Colonic mucosa (tissue), 4 donors: ENCODE measurements at regions of chr17 and their contacts with region 1.

Region 1: GRCh38 chr17:57130761-57131461 is 45.9 kb downstream of the AKAP1 start:
- DNase-seq: peak; percentile 90
- H3K4me3 ChIP-seq: no peak overlapping the region
- H3K27ac ChIP-seq: no peak overlapping the region
- H3K4me1 ChIP-seq: no peaks in the 10 kb centered on the region
- H3K27me3 ChIP-seq: no peaks in the 10 kb centered on the region
- CTCF ChIP-seq: peak; percentile 89

Region 2: DNA sequence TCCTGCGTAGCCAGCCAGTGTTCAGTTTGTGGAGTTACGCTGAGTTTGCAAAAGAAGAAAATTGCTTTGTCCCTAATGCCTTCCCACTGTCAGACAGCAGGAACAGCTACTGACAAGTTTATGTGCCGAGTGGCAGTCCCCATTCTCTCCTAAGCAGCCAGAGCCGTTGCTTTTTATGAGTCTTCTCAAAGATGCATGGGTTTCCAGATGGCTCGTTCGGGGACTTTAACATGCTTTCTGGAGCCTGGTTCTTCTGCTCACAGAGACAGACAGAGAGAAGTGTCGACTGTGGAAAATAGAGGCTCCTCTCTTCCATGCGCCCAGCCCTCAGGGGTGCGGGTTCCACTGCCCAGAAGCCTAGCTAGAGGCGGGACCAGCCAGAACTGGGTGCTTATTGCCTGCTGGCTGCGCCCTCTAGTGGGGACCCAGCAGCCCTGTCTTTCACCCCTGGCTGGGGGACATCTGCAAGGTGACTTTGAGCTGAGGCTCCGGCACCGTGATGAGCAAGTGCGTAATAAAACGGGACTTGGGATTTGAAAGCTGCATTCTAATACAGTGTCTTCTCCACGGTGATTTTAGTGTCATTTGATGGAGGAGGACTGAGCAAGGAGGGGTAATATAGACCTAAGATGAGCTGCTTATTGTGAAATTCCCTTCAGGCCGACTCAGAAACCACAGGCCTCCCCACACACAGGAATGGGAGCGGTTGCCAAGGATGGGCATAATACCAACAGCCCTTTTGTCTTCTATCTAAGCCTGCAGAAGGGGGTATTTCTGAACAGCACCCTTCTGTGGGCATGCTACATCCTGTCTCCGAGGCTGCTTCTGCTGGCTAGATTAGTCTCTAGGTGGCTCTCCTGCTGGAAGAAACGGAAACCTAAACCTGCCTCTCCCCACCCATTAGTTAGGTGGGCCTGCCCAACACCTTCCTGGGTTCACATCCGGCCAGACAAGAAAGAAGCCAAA is 541.0 kb after region 1 on chr17:
- intact Hi-C with region 1: loop called (anchors 10 kb)
- DNase-seq: peak; percentile 55
- H3K4me3 ChIP-seq: no peak overlapping the region
- H3K27ac ChIP-seq: no peak overlapping the region
- H3K4me1 ChIP-seq: no peaks in the 10 kb centered on the region
- H3K27me3 ChIP-seq: no peaks in the 10 kb centered on the region
- CTCF ChIP-seq: peak; percentile 89

Region 3: DNA sequence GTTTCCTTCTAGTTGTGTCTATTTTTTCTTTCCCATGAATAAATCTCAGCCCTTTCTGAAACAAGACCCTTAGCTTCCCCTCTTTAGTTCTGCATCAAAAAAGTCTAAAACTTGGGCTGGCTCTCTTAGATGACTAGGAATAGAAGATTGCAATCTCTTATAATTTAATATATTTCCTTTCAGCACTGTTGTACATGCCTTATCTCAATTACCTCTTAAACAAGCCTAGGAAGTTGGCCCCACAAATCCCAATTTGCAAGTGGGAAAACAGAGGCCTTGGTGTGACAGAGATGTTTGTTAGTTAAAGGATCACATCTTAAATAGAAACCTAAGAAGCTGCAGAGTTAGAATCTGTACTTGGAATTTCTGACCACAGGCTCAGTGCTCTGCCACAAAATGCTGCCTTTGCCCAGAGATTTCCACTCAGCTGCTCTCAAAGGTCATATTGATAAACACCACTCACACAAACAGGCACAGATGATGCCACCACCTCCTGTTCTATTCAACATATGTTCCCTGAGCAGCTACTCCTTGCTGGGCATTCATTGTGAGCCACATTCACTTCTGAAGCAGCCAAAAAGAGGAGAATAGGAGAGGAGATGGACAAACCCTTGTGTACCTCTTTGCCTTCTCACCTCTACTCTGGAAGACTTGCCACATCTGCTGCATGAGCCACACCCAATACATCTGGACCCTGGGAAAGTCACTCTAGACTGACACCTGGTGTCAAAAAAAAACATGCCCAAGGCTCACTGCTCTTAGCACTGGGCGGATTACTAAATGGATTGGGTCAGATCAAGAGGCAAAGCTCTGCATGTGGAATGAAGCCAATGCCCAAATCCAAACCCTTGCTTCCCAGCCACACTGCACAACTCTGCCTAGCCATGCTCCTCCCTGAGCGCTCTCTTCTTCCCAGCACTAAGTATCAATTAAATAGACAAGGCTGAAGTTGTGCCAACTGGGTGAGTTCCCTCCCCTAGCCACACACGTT is 608.8 kb after region 1 on chr17:
- intact Hi-C with region 1: loop called (anchors 5 kb)
- DNase-seq: peak; percentile 20
- H3K4me3 ChIP-seq: no peak overlapping the region
- H3K27ac ChIP-seq: no peak overlapping the region
- H3K4me1 ChIP-seq: no peaks in the 10 kb centered on the region
- H3K27me3 ChIP-seq: no peaks in the 10 kb centered on the region
- CTCF ChIP-seq: peak; percentile 24

Region 4: DNA sequence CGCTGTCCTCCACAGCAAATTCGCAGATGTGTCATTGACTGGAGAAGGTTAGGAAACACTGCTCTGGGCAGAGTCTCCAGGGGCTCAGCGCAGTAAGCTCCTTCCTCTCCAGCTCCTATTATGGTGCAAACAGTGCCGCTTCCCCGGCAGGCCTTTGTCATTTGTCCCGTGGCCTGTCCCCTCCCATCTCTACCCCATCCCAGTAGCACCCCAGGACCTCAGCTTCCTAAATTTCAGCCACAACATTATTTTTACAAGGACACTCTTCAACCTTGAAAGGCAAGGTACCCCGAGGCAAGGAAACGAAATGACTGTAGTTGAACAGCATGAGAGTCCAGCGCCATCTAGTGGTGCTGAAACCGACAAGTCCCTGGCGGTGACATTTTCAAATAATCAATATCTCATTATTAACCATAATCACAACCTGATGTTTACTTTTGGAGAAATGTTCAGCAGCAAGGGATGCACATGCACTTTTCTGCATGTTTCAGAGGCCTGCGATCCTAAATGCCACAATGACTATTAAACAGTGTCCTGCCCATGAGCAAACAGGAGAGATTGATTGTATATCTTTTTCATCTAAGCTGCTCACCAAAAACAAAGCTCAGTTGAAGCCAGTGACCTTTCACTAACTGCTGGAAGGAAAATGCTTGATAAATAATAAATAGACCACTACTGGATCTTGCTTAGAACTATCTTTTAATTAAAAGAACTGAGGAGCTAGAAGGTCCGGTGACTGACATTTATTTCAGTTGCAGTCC is 702.4 kb after region 1 on chr17:
- intact Hi-C with region 1: loop called (anchors 5 kb)
- DNase-seq: peak; percentile 64
- H3K4me3 ChIP-seq: peak overlapping the region; percentile 11
- H3K27ac ChIP-seq: no peak overlapping the region
- H3K4me1 ChIP-seq: no peaks in the 10 kb centered on the region
- H3K27me3 ChIP-seq: no peaks in the 10 kb centered on the region
- CTCF ChIP-seq: peak; percentile 78